ENCODE measurements at regions of chr14 and their contacts with region 1.

Region 1: DNA sequence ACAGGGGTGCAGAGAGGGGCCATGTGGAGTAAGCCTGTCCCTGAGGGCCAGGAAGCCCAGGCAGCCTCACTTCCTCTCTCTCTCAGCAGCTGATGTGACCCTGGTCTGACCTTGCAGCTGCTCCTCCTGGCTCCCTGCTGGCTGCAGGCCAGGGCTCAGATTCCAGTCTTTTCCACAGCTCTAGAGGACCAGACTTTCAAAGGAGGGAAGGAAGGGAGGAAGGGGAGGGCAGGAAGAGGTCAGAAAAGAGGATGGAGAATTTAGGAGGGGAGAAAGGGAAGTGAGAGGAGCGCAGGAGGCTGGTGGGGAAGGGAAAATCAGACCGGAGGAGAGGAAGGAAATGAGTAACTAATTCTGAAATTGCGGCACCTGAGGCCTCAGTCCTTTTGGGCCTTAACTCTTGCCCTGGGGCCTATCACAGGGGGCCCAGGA is 40.9 kb upstream of the VASH1 start:
- H3K4me3 Mint-ChIP-seq: no peak overlapping the region
- H3K27ac Mint-ChIP-seq: peak overlapping the region; percentile 71
- H3K4me1 Mint-ChIP-seq: peaks cover 68% of the 10 kb centered on the region
- H3K27me3 Mint-ChIP-seq: no peaks in the 10 kb centered on the region

Region 2: GRCh38 chr14:76761136-76761959 is 41.0 kb after region 1 on chr14 and contains the start of gene VASH1:
- intact Hi-C with region 1: loop called (anchors 5 kb)
- H3K4me3 Mint-ChIP-seq: peak within 1 kb of the TSS; percentile 88
- H3K27ac Mint-ChIP-seq: peak within 1 kb of the TSS; percentile 86
- H3K4me1 Mint-ChIP-seq: peaks cover 67% of the 10 kb centered on the region
- H3K27me3 Mint-ChIP-seq: peaks cover 2% of the 10 kb centered on the region

Region 3: GRCh38 chr14:76773188-76773885 is 52.9 kb after region 1 on chr14:
- intact Hi-C with region 1: no loop called
- H3K4me3 Mint-ChIP-seq: peak overlapping the region; percentile 52
- H3K27ac Mint-ChIP-seq: peak overlapping the region; percentile 77
- H3K4me1 Mint-ChIP-seq: peaks cover 100% of the 10 kb centered on the region
- H3K27me3 Mint-ChIP-seq: no peaks in the 10 kb centered on the region

Measured in dendritic cell treated with granulocyte-macrophage colony-stimulating factor and Interleukin-4, amounts not matched to agents 40 ng/mL and 50 ng/mL, for 4 days (primary cell).